ENCODE measurements at regions of chr3 and their contacts with region 1.

Region 1: GRCh38 chr3:184513276-184514170 is 48.1 kb upstream of the EPHB3 start:
- DNase-seq: peak; percentile 72 to 81 (median 80)
- H3K4me3 ChIP-seq: peak overlapping the region; percentile 19 to 77 (median 31)
- H3K4me3 Mint-ChIP-seq: peak overlapping the region; percentile 75 to 92
- H3K27ac ChIP-seq: peak overlapping the region in 1 of 2 donors; percentile 24
- H3K27ac Mint-ChIP-seq: peak overlapping the region in 4 of 7 donors; percentile 45 to 64 (median 50)
- H3K4me1 ChIP-seq: peaks cover 21 to 25% of the 10 kb centered on the region in 2 donors
- H3K4me1 Mint-ChIP-seq: peaks cover 23% of the 10 kb centered on the region
- H3K27me3 ChIP-seq: peaks cover 9 to 19% of the 10 kb centered on the region in 2 donors
- H3K27me3 Mint-ChIP-seq: peaks cover 17 to 25% (median 19%) of the 10 kb centered on the region in 3 donors
- CTCF ChIP-seq: peak; percentile 91

Region 2: GRCh38 chr3:183924956-183925355 is 588.6 kb before region 1 on chr3:
- intact Hi-C with region 1: no loop called
- DNase-seq: no peak
- H3K4me3 ChIP-seq: no peak overlapping the region
- H3K4me3 Mint-ChIP-seq: no peak overlapping the region
- H3K27ac ChIP-seq: no peak overlapping the region
- H3K27ac Mint-ChIP-seq: peak overlapping the region in 2 of 7 donors; percentile 9 to 26
- H3K4me1 ChIP-seq: no peaks in the 10 kb centered on the region
- H3K4me1 Mint-ChIP-seq: no peaks in the 10 kb centered on the region
- H3K27me3 ChIP-seq: no peaks in the 10 kb centered on the region
- H3K27me3 Mint-ChIP-seq: peaks cover 0 to 2% (median 0%) of the 10 kb centered on the region in 3 donors
- CTCF ChIP-seq: no peak

Region 3: DNA sequence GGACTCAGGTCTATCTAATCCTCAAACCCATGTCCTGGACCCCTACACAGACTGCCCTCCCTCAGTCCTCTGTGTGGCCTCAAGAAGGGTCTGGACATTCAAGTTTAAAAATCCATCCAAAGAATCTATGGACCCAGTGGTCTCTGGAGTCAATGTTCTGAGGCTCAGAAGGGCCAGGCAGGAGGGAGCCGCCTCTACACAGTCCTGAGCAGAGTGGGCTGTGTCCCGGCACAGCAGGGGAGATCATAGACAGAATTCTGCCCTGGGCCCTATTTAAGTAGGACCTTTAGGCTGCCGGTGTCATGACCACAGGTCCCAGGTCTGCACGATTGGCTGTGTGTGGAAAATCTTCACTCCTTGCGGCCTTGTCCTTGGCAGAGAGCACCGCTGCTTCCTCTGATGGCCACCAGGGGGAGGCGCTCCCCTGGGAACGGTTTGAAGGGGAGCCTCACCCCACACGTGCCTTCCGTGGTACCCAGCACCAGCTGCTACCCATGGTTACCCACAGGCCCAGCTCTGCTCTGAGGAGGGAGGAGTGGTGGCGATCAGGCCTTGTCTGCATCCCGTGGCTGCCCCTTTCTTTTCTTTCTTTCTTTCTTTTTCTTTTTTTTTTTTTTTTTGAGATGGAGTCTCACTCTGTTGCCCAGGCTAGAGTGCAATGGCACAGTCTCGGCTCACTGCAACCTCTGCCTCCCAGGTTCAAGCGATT is 95.8 kb before region 1 on chr3:
- intact Hi-C with region 1: loop called (anchors 5 kb)
- DNase-seq: peak; percentile 68 to 78 (median 71)
- H3K4me3 ChIP-seq: no peak overlapping the region
- H3K4me3 Mint-ChIP-seq: no peak overlapping the region
- H3K27ac ChIP-seq: no peak overlapping the region
- H3K27ac Mint-ChIP-seq: no peak overlapping the region
- H3K4me1 ChIP-seq: no peaks in the 10 kb centered on the region
- H3K4me1 Mint-ChIP-seq: peaks cover 2% of the 10 kb centered on the region
- H3K27me3 ChIP-seq: no peaks in the 10 kb centered on the region
- H3K27me3 Mint-ChIP-seq: peaks cover under 1 to 3% (median 2%) of the 10 kb centered on the region in 3 donors
- CTCF ChIP-seq: peak; percentile 95

Region 4: DNA sequence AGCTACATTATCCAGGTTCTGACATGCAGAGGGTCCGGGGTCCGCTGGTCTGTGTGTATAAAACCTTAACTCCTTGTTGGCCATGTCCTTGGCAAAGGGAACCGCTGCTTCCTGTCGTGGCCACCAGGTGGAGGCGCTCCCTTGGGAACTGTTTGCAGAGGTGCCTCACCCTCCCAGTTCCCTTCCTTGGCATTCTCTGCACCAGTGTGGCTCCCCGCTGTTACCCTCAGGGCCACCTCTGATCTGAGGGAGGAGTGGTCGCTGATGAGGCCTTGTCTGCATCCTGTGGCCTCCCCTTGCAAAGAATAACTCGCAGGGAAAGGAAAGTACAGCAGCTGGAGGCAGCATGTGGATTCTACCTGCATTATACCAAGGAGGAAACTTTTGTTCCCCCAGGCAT is 44.1 kb before region 1 on chr3:
- intact Hi-C with region 1: loop called (anchors 5 kb)
- DNase-seq: peak in 2 of 3 donors; percentile 41 to 42
- H3K4me3 ChIP-seq: no peak overlapping the region
- H3K4me3 Mint-ChIP-seq: no peak overlapping the region
- H3K27ac ChIP-seq: no peak overlapping the region
- H3K27ac Mint-ChIP-seq: no peak overlapping the region
- H3K4me1 ChIP-seq: peaks cover 36 to 37% of the 10 kb centered on the region in 2 donors
- H3K4me1 Mint-ChIP-seq: peaks cover 45% of the 10 kb centered on the region
- H3K27me3 ChIP-seq: no peaks in the 10 kb centered on the region
- H3K27me3 Mint-ChIP-seq: peaks cover 0 to 12% (median 5%) of the 10 kb centered on the region in 3 donors
- CTCF ChIP-seq: peak; percentile 66

Region 5: DNA sequence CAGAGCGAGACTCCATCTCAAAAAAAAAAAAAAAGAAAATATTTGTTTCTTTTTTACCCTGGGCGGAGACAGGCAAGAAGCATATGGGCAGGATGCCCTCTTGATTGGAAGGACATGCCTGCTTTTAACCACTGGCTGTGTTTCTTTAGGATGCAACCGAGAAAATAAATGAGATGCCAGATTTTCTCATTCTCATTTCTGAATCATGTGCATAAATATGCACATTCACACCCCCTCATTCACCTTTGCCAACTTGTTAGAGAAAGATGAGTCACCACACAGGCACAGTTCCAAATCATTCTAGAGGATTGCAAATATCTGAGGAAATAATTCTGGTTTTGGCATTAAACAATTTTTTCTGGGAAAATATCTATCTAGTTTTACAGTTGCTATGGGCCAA is 1035.6 kb after region 1 on chr3:
- intact Hi-C with region 1: no loop called
- DNase-seq: no peak
- H3K4me3 ChIP-seq: no peak overlapping the region
- H3K4me3 Mint-ChIP-seq: no peak overlapping the region
- H3K27ac ChIP-seq: no peak overlapping the region
- H3K27ac Mint-ChIP-seq: no peak overlapping the region
- H3K4me1 ChIP-seq: no peaks in the 10 kb centered on the region
- H3K4me1 Mint-ChIP-seq: peaks cover 6% of the 10 kb centered on the region
- H3K27me3 ChIP-seq: no peaks in the 10 kb centered on the region
- H3K27me3 Mint-ChIP-seq: peaks cover 0 to 6% (median 0%) of the 10 kb centered on the region in 3 donors
- CTCF ChIP-seq: no peak